Activated B cell treated with CpG ODN at 0.5 μM for 24 hours (primary cell): ENCODE measurements at regions of chr9 and their contacts with region 1.

Region 1: DNA sequence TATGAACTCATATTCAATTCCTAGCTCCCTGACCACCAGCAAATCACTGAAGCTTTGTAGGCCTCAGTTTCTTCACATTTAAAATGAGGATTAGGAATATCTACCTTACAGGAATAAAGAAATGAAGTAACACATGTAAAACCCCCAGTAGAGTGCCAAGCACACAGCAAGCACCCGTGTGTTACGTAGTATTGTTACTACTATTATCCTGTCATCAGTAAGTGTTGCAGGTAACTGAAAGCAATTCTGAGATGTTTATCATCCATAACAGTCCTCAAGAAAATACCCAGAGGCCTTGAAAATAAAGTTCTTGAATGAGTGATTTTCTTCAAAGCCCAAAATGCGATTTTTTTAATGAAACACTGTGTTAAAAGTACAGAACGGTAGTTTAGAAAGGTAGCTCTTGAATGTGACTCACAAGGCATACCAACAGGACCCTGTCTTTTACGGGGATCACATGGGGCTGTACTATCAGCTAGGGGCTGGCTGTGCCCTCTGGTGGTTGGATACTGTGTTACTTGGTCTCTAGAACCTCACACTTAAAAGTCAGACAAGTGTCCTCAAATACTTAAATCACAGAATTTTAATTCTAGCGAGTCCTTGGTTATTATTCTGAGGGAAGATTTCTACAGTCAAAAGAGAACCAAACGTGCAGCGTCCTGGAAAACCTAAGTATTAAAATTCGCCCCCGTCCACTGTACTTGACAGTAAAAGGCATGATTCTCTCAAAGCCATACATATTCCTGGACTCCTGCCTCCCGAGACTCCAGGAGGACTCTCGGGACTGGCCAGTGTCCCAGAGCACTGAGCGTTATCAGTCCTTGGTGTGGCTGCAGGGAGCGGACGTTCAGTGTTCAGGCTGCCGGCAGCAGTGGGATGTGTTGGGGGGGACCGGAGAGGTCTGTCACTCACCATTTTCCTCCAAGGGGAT is 725 bp downstream of the NDUFB6 start:
- DNase-seq: no peak
- ATAC-seq: peak; percentile 80
- H3K4me3 Mint-ChIP-seq: peak overlapping the region; percentile 99
- H3K27ac Mint-ChIP-seq: peak overlapping the region; percentile 94
- H3K4me1 Mint-ChIP-seq: peaks cover 21% of the 10 kb centered on the region
- H3K27me3 Mint-ChIP-seq: no peaks in the 10 kb centered on the region
- CTCF ChIP-seq: peak; percentile 30

Region 2: DNA sequence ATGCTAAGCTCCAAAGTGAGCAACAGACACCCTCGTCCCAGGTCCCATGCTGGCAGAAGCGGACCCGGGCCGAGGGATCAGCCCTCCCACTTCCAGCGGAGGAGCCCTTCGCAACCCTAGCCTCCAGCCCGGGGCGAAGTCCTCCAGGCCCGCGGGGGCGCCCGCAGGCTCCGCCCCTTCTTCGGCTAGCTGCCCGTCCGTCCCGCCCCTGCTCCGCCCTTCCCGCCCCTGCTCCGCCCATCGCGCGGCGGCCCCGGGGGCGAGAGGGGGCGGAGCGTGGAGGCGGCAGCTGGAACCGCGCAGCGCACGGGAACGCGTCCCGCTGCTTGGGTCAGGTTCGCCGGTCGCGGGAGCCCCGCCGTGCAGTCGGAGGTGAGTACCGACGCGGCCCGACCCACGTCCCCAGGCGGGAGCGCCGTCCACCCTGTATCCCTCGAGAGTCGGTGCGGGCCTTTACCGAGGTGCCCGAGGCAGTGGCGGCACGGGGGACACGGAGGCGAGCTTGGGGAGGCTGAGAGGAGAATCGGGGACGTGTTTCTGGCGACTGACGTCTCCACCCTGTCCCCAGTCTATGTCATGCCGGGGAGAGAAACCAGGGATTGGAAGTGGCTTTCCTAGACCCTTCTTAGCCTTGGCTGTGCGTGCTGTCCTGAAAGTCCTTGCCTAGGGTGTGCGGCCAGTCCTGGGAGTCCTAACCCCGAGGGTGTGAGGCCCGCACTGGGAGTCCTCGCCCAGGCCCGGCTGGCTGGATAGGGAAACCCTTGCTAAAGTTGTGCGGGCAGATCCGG is 187.7 kb before region 1 on chr9 and contains the start of gene ACO1:
- CTCF ChIA-PET with region 1: interaction called, 440 read pairs
- POLR2A ChIA-PET with region 1: interaction called, 8 read pairs
- intact Hi-C with region 1: loop called (anchors 1 kb)
- DNase-seq: peak; percentile 92
- ATAC-seq: peak; percentile 98
- H3K4me3 Mint-ChIP-seq: peak within 1 kb of the TSS; percentile 86
- H3K27ac Mint-ChIP-seq: peak within 1 kb of the TSS; percentile 46
- H3K4me1 Mint-ChIP-seq: peaks cover 11% of the 10 kb centered on the region
- H3K27me3 Mint-ChIP-seq: peaks cover 21% of the 10 kb centered on the region
- CTCF ChIP-seq: no peak
- total RNA-seq, gene ACO1: 10.3 and 10.4 TPM in 2 replicates

Region 3: GRCh38 chr9:32431940-32432555 is 140.2 kb before region 1 on chr9:
- CTCF ChIA-PET with region 1: no interaction called
- POLR2A ChIA-PET with region 1: interaction called, 6 read pairs
- intact Hi-C with region 1: loop called (anchors 2 kb)
- DNase-seq: no peak
- ATAC-seq: peak; percentile 52
- H3K4me3 Mint-ChIP-seq: no peak overlapping the region
- H3K27ac Mint-ChIP-seq: no peak overlapping the region
- H3K4me1 Mint-ChIP-seq: no peaks in the 10 kb centered on the region
- H3K27me3 Mint-ChIP-seq: no peaks in the 10 kb centered on the region
- CTCF ChIP-seq: no peak

Region 4: DNA sequence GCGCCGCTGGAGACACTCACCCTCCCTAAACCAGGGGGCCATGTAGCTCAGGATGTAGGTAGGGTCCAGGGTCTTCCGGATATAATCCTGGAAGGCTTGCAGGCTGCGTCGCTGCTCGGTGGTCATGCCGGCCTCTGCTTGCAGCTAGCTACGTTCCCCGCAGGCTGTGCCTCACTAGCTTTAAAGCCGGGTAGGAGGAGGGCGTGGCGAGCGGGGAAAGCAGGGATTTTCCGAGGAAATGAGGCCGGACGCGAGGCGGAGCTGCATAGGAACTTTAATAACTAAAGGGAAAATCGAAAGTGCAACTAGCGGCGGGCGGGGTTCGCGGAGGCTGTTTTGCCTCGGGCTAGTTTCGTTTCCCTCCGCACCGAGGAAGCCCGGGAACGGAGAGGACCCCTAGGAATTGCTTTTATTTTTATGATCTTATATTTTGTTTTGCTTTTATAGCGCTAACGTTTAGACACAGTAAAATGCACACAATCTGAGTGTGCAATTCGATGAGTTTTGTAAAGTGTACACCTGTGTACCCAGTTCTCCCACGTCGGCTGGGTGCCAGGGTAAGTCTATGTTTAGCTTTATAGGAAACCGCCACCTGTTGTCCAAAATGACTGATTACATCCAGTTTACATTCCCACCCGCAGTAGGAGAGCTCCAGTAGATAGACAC is 46.1 kb before region 1 on chr9 and contains the start of gene RIGI:
- CTCF ChIA-PET with region 1: interaction called, 6 read pairs
- POLR2A ChIA-PET with region 1: interaction called, 5 read pairs
- intact Hi-C with region 1: loop called (anchors 1 kb)
- DNase-seq: peak; percentile 59
- ATAC-seq: peak; percentile 69
- H3K4me3 Mint-ChIP-seq: peak within 1 kb of the TSS; percentile 98
- H3K27ac Mint-ChIP-seq: peak within 1 kb of the TSS; percentile 94
- H3K4me1 Mint-ChIP-seq: peaks cover 55% of the 10 kb centered on the region
- H3K27me3 Mint-ChIP-seq: no peaks in the 10 kb centered on the region
- CTCF ChIP-seq: no peak
- total RNA-seq, gene RIGI: 11.3 and 12.3 TPM in 2 replicates

Region 5: GRCh38 chr9:32550562-32551433 is 21.4 kb before region 1 on chr9:
- CTCF ChIA-PET with region 1: interaction called, 20 read pairs
- POLR2A ChIA-PET with region 1: interaction called, 36 read pairs
- intact Hi-C with region 1: loop called (anchors 1 kb)
- DNase-seq: peak; percentile 91
- ATAC-seq: peak; percentile 80
- H3K4me3 Mint-ChIP-seq: peak overlapping the region; percentile 95
- H3K27ac Mint-ChIP-seq: peak overlapping the region; percentile 98
- H3K4me1 Mint-ChIP-seq: peaks cover 34% of the 10 kb centered on the region
- H3K27me3 Mint-ChIP-seq: no peaks in the 10 kb centered on the region
- CTCF ChIP-seq: no peak

Region 6: GRCh38 chr9:32558408-32558934 is 13.8 kb before region 1 on chr9:
- CTCF ChIA-PET with region 1: interaction called, 11 read pairs
- POLR2A ChIA-PET with region 1: interaction called, 3 read pairs
- intact Hi-C with region 1: loop called (anchors 1 kb)
- DNase-seq: no peak
- ATAC-seq: no peak
- H3K4me3 Mint-ChIP-seq: no peak overlapping the region
- H3K27ac Mint-ChIP-seq: no peak overlapping the region
- H3K4me1 Mint-ChIP-seq: peaks cover 16% of the 10 kb centered on the region
- H3K27me3 Mint-ChIP-seq: no peaks in the 10 kb centered on the region
- CTCF ChIP-seq: no peak

Region 7: GRCh38 chr9:33225319-33226149 is 653.3 kb after region 1 on chr9:
- CTCF ChIA-PET with region 1: no interaction called
- POLR2A ChIA-PET with region 1: no interaction called
- intact Hi-C with region 1: loop called (anchors 5 kb)
- DNase-seq: no peak
- ATAC-seq: peak; percentile 33
- H3K4me3 Mint-ChIP-seq: no peak overlapping the region
- H3K27ac Mint-ChIP-seq: peak overlapping the region; percentile 4
- H3K4me1 Mint-ChIP-seq: peaks cover 51% of the 10 kb centered on the region
- H3K27me3 Mint-ChIP-seq: no peaks in the 10 kb centered on the region
- CTCF ChIP-seq: no peak